Pancreas (tissue), 10 donors: ENCODE measurements at regions of chr3 and their contacts with region 1.

Region 1: GRCh38 chr3:134464064-134464697 is 21.6 kb downstream of the ANAPC13 start:
- DNase-seq: peak in 4 of 6 donors; percentile 27 to 49 (median 34)
- ATAC-seq: peak in 3 of 4 donors; percentile 42 to 61 (median 59)
- H3K4me3 ChIP-seq: no peak overlapping the region
- H3K27ac ChIP-seq: no peak overlapping the region
- H3K4me1 ChIP-seq: no peaks in the 10 kb centered on the region
- H3K27me3 ChIP-seq: no peaks in the 10 kb centered on the region
- CTCF ChIP-seq: no peak

Region 2: DNA sequence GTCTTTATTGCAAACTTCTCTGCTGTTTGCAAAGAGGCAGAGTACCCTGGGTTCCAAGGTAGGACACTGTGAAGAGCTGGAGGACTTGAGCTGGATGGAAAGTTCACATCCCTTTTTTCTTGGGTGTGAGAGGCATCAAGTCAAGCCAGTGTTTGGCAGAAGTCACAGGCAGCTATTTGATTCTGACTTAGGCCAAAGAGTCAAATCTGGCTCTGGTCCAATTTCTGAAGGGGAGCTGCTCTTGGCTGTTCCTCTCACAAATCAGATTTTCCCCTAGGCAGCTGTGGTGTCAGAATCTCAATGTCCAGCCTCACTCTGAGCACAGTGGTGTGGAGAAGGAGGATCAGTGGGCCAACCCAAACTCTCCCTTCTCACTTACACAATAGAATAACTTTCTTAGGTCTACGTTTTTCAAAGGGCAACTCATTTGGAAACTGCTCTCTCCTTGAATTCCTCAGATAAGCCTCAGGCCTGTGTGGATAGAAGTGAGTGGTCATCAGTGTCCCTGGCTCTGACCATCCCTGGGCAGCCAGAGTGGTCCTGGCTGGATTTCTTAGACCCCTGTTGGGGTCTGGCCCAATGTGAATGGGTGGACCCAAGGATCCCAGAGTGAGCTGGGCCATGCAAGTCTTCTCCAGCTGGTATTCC is 71.7 kb before region 1 on chr3:
- intact Hi-C with region 1: loop called in 1 of 3 experiments (anchors 10 kb)
- DNase-seq: no peak
- ATAC-seq: peak in 1 of 4 donors; percentile 47
- H3K4me3 ChIP-seq: no peak overlapping the region
- H3K27ac ChIP-seq: no peak overlapping the region
- H3K4me1 ChIP-seq: no peaks in the 10 kb centered on the region
- H3K27me3 ChIP-seq: no peaks in the 10 kb centered on the region
- CTCF ChIP-seq: no peak